Motor neuron (in vitro differentiated cells): ENCODE measurements at regions of chr1 and their contacts with region 1.

Region 1: GRCh38 chr1:26913754-26914619 is at the start of gene NR0B2:
- ATAC-seq: peak in 4 of 8 experiments; percentile 10 to 33 (median 24)
- H3K4me3 ChIP-seq: no peak within 1 kb of the TSS
- H3K27ac ChIP-seq: no peak within 1 kb of the TSS
- H3K4me1 ChIP-seq: no peaks in the 10 kb centered on the region
- total RNA-seq, gene NR0B2: 0.24 TPM in 1 of 8 experiments, not detected in the others

Region 2: GRCh38 chr1:26970810-26971209 is 56.8 kb after region 1 on chr1:
- in situ Hi-C with region 1: loop called in 1 of 9 experiments (anchors 10 kb)
- ATAC-seq: peak in 3 of 8 experiments; percentile 10 to 81 (median 44)
- H3K4me3 ChIP-seq: no peak overlapping the region
- H3K27ac ChIP-seq: no peak overlapping the region
- H3K4me1 ChIP-seq: no peaks in the 10 kb centered on the region

Region 3: GRCh38 chr1:27179379-27179778 is 265.4 kb after region 1 on chr1:
- in situ Hi-C with region 1: no loop called
- ATAC-seq: peak in 3 of 8 experiments; percentile 92 to 95 (median 95)
- H3K4me3 ChIP-seq: no peak overlapping the region
- H3K27ac ChIP-seq: no peak overlapping the region
- H3K4me1 ChIP-seq: no peaks in the 10 kb centered on the region